ENCODE measurements at regions of chr19 and their contacts with region 1.

Region 1: DNA sequence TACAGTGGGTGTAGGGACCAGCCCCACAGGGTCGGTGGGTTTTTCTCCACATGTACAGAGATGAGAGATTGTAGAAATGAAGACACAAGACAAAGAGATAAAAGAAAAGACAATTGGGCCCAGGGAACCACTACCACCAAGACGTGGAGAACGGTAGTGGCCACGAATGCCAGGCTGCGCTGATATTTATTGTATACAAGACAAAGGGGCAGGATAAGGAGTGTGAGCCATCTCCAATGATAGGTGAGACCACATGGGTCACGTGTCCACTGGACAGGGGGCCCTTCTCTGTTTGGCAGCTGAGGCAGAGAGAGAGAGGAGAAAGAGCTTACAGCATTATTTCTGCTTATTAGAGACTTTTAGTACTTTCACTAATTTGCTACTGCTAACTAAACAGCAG is 4.9 kb upstream of the PSG5 start:
- DNase-seq: no peak
- H3K4me3 ChIP-seq: no peak overlapping the region
- H3K27ac ChIP-seq: no peak overlapping the region
- H3K4me1 ChIP-seq: no peaks in the 10 kb centered on the region
- H3K27me3 ChIP-seq: no peaks in the 10 kb centered on the region
- CTCF ChIP-seq: no peak
- EP300 ChIP-seq: no peak
- POLR2A ChIP-seq: no peak

Region 2: GRCh38 chr19:43152217-43152616 is 39.0 kb before region 1 on chr19:
- in situ Hi-C with region 1: no loop called
- intact Hi-C with region 1: no loop called
- DNase-seq: no peak
- H3K4me3 ChIP-seq: no peak overlapping the region
- H3K27ac ChIP-seq: no peak overlapping the region
- H3K4me1 ChIP-seq: no peaks in the 10 kb centered on the region
- H3K27me3 ChIP-seq: no peaks in the 10 kb centered on the region
- CTCF ChIP-seq: no peak
- EP300 ChIP-seq: no peak
- POLR2A ChIP-seq: no peak

Region 3: DNA sequence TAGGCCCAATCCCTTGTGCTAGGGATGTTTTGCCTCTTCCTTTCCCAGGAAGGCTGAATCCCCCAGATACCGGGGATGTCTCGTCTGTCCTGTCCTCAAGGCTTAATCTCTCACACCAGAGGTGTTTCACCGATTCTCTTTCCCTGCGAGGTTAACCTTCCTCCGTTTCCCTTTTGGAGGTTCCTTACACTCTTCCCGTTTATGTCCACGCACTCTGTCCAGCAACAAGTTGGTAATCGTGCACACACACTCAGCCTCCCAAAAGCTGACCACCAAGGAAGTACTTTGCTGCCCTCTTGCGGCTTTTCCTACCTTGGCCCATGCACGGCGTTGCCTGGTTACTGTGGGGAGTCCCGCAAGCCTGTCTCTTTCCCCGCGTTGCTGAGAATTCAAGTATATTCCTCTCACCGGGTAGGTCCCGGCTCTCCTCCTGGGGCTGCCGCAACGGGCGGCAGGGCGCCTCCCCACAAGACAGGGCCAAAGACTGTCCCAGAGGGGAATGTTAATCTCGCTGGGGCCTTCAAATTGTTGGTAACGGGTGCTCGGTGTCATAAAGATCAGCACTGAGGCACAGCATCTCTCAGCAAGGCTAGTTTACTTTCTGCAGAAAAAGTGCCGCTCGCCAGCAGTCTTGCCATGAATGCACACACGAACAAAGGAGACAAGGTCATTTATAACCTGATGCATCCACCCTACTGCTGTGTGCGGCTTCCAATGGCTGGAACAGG is 125.6 kb after region 1 on chr19:
- in situ Hi-C with region 1: loop called in 1 of 4 experiments (anchors 25 kb)
- intact Hi-C with region 1: no loop called
- DNase-seq: peak; percentile 26
- H3K4me3 ChIP-seq: no peak overlapping the region
- H3K27ac ChIP-seq: no peak overlapping the region
- H3K4me1 ChIP-seq: no peaks in the 10 kb centered on the region
- H3K27me3 ChIP-seq: peaks cover 4% of the 10 kb centered on the region
- CTCF ChIP-seq: peak in 2 of 5 experiments; percentile 18 to 26
- EP300 ChIP-seq: no peak
- POLR2A ChIP-seq: no peak